ENCODE measurements at regions of chr5 and their contacts with region 1.

Region 1: DNA sequence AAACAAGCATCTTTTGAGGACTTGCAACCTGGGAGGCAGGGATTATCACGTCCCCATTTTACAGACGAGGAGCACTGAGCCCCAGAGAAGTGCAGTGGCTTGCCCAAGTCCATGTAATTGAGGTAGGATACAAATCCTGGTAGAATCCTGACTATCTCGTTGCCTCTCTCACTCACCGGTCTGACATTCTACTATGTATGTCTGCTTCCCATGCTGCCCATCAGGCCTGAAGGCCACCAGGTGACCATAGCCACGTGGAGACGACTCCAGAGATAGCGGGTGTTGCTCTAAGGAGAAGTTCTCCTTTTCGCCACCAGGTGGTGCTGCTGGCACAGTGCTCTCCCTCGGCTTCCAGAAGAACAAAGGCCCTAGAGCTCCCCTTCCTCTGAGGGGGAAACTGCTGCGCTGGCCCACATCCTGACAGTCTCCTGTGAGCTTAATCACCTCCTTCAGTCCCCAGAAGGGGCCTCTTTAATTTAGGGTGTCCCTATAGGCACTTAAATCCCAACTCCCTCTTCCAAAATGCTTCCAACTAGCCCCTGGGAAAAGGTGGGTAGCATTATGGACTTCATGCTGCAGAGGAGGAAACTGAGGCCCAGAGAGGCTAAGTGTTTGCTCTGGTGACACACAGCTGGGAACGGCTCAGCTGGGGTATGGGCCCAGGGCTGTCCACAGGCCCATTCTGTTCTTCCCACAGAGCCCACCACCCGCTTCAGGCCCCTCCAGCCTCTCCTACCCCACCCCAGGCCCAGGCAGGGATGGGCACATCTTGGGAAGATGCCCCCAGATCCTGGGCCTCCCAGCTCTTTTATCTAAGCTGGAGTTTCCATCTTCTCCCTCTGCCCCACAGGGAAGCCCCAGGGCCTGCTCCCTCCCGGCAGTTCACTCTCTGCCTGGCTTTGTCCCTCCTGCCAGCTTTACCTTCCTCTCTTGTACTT is 6.4 kb downstream of the SLC34A1 start:
- DNase-seq: peak; percentile 94
- ATAC-seq: peak; percentile 84
- H3K4me3 Mint-ChIP-seq: peak overlapping the region; percentile 19
- H3K27ac Mint-ChIP-seq: peak overlapping the region; percentile 93
- H3K4me1 Mint-ChIP-seq: peaks cover 59% of the 10 kb centered on the region
- H3K27me3 Mint-ChIP-seq: peaks cover 3% of the 10 kb centered on the region

Region 2: GRCh38 chr5:176944276-176944675 is 446.4 kb before region 1 on chr5:
- CTCF ChIA-PET with region 1: no interaction called
- POLR2A ChIA-PET with region 1: no interaction called
- DNase-seq: no peak
- ATAC-seq: no peak
- H3K4me3 Mint-ChIP-seq: no peak overlapping the region
- H3K27ac Mint-ChIP-seq: peak overlapping the region; percentile 1
- H3K4me1 Mint-ChIP-seq: no peaks in the 10 kb centered on the region
- H3K27me3 Mint-ChIP-seq: no peaks in the 10 kb centered on the region

Region 3: GRCh38 chr5:177066224-177066623 is 324.4 kb before region 1 on chr5:
- CTCF ChIA-PET with region 1: no interaction called
- POLR2A ChIA-PET with region 1: no interaction called
- DNase-seq: no peak
- ATAC-seq: no peak
- H3K4me3 Mint-ChIP-seq: no peak overlapping the region
- H3K27ac Mint-ChIP-seq: no peak overlapping the region
- H3K4me1 Mint-ChIP-seq: no peaks in the 10 kb centered on the region
- H3K27me3 Mint-ChIP-seq: no peaks in the 10 kb centered on the region

Region 4: GRCh38 chr5:177113566-177114424 is 276.8 kb before region 1 on chr5:
- CTCF ChIA-PET with region 1: interaction called, 30 read pairs
- POLR2A ChIA-PET with region 1: interaction called, 3 read pairs
- DNase-seq: peak; percentile 87
- ATAC-seq: peak; percentile 67
- H3K4me3 Mint-ChIP-seq: no peak overlapping the region
- H3K27ac Mint-ChIP-seq: peak overlapping the region; percentile 45
- H3K4me1 Mint-ChIP-seq: peaks cover 27% of the 10 kb centered on the region
- H3K27me3 Mint-ChIP-seq: no peaks in the 10 kb centered on the region

Region 5: DNA sequence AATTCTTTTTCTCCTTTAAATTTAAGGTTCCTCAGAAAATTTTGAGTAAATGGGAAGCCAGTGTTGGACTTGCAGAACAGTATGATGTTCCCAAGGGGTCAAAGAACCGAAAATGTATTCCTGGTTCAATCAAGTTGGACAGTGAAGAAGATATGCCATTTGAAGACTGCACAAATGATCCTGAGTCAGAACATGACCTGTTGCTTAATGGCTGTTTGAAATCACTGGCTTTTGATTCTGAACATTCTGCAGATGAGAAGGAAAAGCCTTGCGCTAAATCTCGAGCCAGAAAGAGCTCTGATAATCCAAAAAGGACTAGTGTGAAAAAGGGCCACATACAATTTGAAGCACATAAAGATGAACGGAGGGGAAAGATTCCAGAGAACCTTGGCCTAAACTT is 181.0 kb before region 1 on chr5:
- CTCF ChIA-PET with region 1: no interaction called
- POLR2A ChIA-PET with region 1: no interaction called
- DNase-seq: no peak
- ATAC-seq: no peak
- H3K4me3 Mint-ChIP-seq: no peak overlapping the region
- H3K27ac Mint-ChIP-seq: no peak overlapping the region
- H3K4me1 Mint-ChIP-seq: peaks cover 1% of the 10 kb centered on the region
- H3K27me3 Mint-ChIP-seq: no peaks in the 10 kb centered on the region

Region 6: DNA sequence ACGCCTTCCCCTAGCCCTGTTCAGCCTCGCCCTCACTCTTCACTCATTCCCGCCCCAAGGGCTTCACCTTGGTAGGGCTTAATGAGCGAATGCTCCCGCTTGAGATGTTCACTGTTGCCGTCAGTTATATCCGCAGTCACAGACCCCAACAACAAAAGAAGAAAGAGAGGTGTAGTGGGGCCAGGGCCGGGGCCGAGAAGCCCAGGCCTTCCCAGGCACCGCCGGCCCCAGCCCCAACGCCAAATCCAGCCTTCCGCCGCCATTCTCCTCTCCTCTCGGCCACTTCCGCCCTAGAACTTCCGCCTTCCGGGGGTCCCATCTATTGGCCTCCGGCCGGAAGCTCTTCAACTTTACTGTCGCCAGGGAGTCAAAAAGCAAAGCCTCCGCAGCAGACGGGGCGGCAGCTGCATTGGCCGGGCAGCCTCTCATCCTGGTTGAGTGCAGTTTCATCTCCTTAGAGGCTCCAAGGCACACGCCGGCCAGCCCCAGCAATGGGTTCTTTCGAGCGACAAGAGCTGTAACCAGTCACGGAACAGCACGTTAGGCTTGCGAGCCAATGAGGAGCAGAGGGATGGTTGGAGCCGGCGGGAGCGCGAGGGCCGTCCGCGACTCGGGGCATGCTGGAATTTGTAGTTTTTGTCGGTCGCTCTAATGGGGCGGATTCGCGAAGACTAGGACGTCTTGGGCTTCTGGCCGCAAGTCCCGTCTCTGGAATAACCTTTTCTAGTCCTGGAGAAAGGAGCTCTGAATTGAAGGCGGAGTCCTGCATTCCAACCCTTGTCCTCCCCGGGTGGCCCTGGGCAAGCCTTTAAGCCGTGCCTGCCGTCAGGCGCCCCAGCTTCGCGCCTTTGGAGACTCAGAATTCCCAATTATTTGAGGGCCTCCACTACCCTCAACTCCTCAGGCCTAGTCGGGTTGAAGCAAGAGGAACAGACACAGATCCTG is 39.0 kb before region 1 on chr5 and contains the start of gene LMAN2:
- CTCF ChIA-PET with region 1: interaction called, 27 read pairs
- POLR2A ChIA-PET with region 1: interaction called, 3 read pairs
- DNase-seq: peak; percentile 96
- ATAC-seq: peak; percentile 99
- H3K4me3 Mint-ChIP-seq: peak within 1 kb of the TSS; percentile 97
- H3K27ac Mint-ChIP-seq: peak within 1 kb of the TSS; percentile 100
- H3K4me1 Mint-ChIP-seq: peaks cover 66% of the 10 kb centered on the region
- H3K27me3 Mint-ChIP-seq: no peaks in the 10 kb centered on the region
- total RNA-seq, gene LMAN2: 119 to 127 TPM

Region 7: DNA sequence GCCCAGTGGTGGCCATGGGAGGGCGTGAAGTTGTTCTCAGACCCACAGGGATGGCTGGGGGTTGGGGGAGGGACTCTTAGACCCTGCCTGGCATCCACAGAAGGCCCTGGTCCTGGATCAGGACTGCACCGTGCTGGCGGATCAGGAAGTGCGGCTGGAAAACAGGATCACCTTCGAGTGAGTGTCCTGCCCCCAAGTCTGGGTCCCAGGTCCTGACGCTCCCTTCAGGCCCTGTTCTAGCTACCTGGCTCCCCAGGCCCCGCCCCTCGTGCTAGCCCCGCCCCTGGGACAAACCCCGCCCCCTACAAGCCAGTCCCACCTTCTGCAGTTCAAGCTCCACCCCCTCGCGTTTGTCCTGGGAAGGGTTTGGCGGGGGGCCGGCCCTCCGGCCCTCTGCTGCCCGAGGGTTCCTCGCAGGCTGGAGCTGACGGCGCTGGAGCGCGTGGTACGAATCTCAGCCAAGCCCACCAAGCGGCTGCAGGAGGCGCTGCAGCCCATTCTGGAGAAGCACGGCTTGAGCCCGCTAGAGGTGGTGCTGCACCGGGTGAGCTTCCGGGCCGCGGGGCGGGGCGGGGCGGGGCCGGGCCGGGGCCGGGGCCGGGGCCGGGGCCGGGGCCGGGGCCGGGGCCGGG is 20.0 kb before region 1 on chr5:
- CTCF ChIA-PET with region 1: interaction called, 122 read pairs
- POLR2A ChIA-PET with region 1: interaction called, 3 read pairs
- DNase-seq: peak; percentile 63
- ATAC-seq: peak; percentile 62
- H3K4me3 Mint-ChIP-seq: peak overlapping the region; percentile 31
- H3K27ac Mint-ChIP-seq: no peak overlapping the region
- H3K4me1 Mint-ChIP-seq: peaks cover 70% of the 10 kb centered on the region
- H3K27me3 Mint-ChIP-seq: no peaks in the 10 kb centered on the region

Region 8: DNA sequence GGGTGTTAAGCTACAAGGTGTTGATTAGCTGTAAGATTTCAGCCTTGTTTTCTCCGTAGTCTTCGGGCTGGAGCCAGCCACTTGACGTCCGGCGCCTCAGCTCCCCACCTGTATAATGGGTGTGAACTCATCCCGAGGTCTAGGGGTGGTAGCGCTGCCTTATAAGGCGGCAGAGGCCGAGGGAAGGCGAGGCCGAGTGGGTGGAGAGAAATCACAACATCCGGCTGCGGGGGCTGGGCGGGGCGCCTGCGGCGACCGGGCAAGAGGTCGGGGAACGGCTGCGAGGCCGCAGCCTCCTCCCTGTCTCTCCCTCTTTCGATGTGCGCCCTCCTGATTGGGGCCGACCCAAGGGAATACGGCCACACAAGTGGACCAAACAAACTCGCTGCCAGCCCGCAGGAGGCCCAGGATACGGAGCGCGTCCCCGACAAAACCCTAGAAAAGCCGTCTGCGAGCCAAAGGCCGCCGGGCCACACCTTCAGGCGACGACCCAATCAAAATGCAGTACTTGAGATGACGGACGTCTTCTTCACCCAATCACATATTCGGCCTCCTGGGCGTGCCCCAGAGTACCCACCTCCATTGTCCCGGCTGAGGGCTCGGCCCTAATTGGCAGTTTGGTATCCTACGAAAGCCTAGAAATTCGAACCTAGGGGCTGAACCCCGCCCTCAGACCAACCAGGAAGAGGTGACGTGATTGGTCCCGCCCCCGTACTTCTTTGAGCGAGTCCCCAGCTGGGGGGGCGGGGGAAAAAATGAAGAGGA is 35.4 kb after region 1 on chr5:
- CTCF ChIA-PET with region 1: interaction called, 56 read pairs
- POLR2A ChIA-PET with region 1: interaction called, 14 read pairs
- DNase-seq: peak; percentile 100
- ATAC-seq: peak; percentile 86
- H3K4me3 Mint-ChIP-seq: peak overlapping the region; percentile 91
- H3K27ac Mint-ChIP-seq: peak overlapping the region; percentile 93
- H3K4me1 Mint-ChIP-seq: peaks cover 52% of the 10 kb centered on the region
- H3K27me3 Mint-ChIP-seq: no peaks in the 10 kb centered on the region

Region 9: GRCh38 chr5:177454397-177455035 is 63.9 kb after region 1 on chr5:
- CTCF ChIA-PET with region 1: interaction called, 175 read pairs
- POLR2A ChIA-PET with region 1: interaction called, 21 read pairs
- DNase-seq: peak; percentile 94
- ATAC-seq: peak; percentile 50
- H3K4me3 Mint-ChIP-seq: peak overlapping the region; percentile 78
- H3K27ac Mint-ChIP-seq: peak overlapping the region; percentile 75
- H3K4me1 Mint-ChIP-seq: peaks cover 30% of the 10 kb centered on the region
- H3K27me3 Mint-ChIP-seq: peaks cover 3% of the 10 kb centered on the region

Region 10: DNA sequence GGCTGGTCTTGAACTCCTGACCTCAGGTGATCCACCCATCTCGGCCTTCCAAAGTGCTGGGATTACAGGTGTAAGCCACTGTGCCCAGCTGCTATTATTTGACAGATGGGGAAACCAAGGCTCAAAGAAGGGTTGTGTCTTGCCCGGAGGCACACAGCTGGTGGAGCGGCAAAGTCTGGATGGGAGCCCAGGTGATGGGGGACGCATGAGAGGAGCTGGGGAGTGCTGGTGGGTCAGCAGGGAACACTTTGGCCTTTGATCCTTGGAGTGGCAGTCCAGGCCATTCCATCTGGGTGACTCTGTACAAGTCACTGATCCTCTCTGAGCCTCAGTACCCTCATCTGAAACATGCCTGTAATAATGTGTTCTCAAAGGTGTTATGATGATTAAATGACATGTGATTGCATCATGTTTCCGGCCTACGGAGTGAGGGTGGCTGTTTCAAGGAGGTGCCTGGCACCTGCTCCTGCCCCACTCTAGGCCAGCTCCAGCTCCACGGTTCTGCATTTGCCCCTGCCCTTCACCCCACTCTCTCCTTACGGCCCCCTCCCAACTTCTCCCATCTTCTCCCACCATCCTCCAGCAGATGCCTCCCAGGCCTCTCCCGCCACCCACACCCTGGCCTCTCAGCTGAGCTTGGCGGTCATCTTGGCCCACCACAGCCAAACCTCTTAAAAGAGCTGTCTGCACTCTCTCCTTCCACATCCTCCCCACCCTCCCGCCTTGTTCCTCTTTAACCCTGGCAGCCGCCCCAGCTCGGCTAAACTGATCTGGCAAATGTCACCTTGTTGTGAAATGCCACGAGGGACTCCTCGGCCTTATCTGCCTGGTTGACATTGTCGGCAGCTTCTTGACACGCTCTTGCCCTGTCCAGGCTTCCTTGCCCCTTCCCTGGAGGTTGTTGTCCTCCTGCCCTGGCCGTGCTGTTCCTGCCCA is 88.3 kb after region 1 on chr5:
- CTCF ChIA-PET with region 1: interaction called, 16 read pairs
- POLR2A ChIA-PET with region 1: no interaction called
- DNase-seq: peak; percentile 77
- ATAC-seq: peak; percentile 83
- H3K4me3 Mint-ChIP-seq: peak overlapping the region; percentile 39
- H3K27ac Mint-ChIP-seq: peak overlapping the region; percentile 92
- H3K4me1 Mint-ChIP-seq: peaks cover 60% of the 10 kb centered on the region
- H3K27me3 Mint-ChIP-seq: peaks cover 3% of the 10 kb centered on the region

Measured in activated CD8-positive, alpha-beta T cell treated with anti-CD3 and anti-CD28 coated beads, Interleukin-2, amount 10 ng/mL, durations not matched to agents 7 days and 5 days (primary cell).